ENCODE measurements at regions of chr5 and their contacts with region 1.

Region 1: GRCh38 chr5:176573564-176574296 is 24.6 kb downstream of the CDHR2 start:
- DNase-seq: no peak
- H3K4me3 ChIP-seq: no peak overlapping the region
- H3K27me3 ChIP-seq: no peaks in the 10 kb centered on the region
- CTCF ChIP-seq: peak; percentile 86

Region 2: DNA sequence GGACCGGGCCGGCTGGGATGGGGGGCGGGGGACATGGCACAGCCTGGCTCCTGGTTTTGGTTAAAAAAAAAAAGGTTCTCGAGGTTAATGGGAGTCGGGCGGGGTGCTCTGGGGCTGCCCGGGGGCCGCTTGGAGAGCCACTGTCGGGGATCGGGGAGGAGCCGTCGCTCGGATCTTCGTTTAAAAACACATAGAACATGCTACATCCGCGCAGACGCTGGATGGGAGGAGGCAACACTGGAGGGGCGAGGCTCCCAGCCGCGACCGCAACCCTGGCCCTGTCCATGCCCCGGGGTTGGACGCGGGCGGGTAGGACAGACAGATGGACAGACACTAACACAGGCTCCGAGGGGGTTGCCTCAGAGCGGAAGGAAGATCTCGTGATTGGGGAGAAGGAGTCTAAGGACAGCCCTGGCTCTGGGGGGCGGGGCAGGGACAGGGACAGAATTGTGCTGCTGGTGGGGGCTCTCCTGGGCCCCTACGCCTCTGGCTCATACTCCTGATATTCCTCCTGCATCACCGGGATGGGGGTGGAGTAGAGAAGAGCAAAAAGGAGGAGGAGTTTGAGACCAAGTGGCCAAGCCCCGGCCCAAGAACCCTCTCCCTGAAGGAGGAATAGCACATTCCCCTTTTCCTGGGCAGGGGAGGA is 46.7 kb after region 1 on chr5:
- CTCF ChIA-PET with region 1: interaction called, 13 read pairs
- POLR2A ChIA-PET with region 1: no interaction called
- DNase-seq: no peak
- H3K4me3 ChIP-seq: peak overlapping the region; percentile 14
- H3K27me3 ChIP-seq: peaks cover 30% of the 10 kb centered on the region
- CTCF ChIP-seq: no peak

Region 3: GRCh38 chr5:176875783-176876505 is 302.2 kb after region 1 on chr5:
- CTCF ChIA-PET with region 1: no interaction called
- POLR2A ChIA-PET with region 1: no interaction called
- DNase-seq: no peak
- H3K4me3 ChIP-seq: no peak overlapping the region
- H3K27me3 ChIP-seq: peaks cover 23% of the 10 kb centered on the region
- CTCF ChIP-seq: no peak